Calu3 (cell line): ENCODE measurements at regions of chr1 and their contacts with region 1.

Region 1: GRCh38 chr1:241834733-241835377 is 13.1 kb upstream of the EXO1 start:
- DNase-seq: peak; percentile 16
- H3K4me3 Mint-ChIP-seq: no peak overlapping the region
- H3K27ac Mint-ChIP-seq: no peak overlapping the region
- H3K4me1 Mint-ChIP-seq: peaks cover 8% of the 10 kb centered on the region
- H3K27me3 Mint-ChIP-seq: no peaks in the 10 kb centered on the region
- CTCF ChIP-seq: peak; percentile 37

Region 2: GRCh38 chr1:241457421-241457820 is 377.4 kb before region 1 on chr1:
- CTCF ChIA-PET with region 1: no interaction called
- intact Hi-C with region 1: no loop called
- DNase-seq: no peak
- H3K4me3 Mint-ChIP-seq: no peak overlapping the region
- H3K27ac Mint-ChIP-seq: no peak overlapping the region
- H3K4me1 Mint-ChIP-seq: no peaks in the 10 kb centered on the region
- H3K27me3 Mint-ChIP-seq: no peaks in the 10 kb centered on the region
- CTCF ChIP-seq: no peak

Region 3: GRCh38 chr1:241627453-241628259 is 207.2 kb before region 1 on chr1:
- CTCF ChIA-PET with region 1: no interaction called
- intact Hi-C with region 1: loop called (anchors 5 kb)
- DNase-seq: peak; percentile 67
- H3K4me3 Mint-ChIP-seq: no peak overlapping the region
- H3K27ac Mint-ChIP-seq: no peak overlapping the region
- H3K4me1 Mint-ChIP-seq: peaks cover 37% of the 10 kb centered on the region
- H3K27me3 Mint-ChIP-seq: no peaks in the 10 kb centered on the region
- CTCF ChIP-seq: peak; percentile 75

Region 4: GRCh38 chr1:241706954-241707365 is 127.9 kb before region 1 on chr1:
- CTCF ChIA-PET with region 1: no interaction called
- intact Hi-C with region 1: loop called (anchors 10 kb)
- DNase-seq: peak; percentile 64
- H3K4me3 Mint-ChIP-seq: peak overlapping the region; percentile 48
- H3K27ac Mint-ChIP-seq: peak overlapping the region; percentile 72
- H3K4me1 Mint-ChIP-seq: peaks cover 15% of the 10 kb centered on the region
- H3K27me3 Mint-ChIP-seq: no peaks in the 10 kb centered on the region
- CTCF ChIP-seq: no peak